AG04449 (cell line): ENCODE measurements at regions of chr6 and their contacts with region 1.

Region 1: DNA sequence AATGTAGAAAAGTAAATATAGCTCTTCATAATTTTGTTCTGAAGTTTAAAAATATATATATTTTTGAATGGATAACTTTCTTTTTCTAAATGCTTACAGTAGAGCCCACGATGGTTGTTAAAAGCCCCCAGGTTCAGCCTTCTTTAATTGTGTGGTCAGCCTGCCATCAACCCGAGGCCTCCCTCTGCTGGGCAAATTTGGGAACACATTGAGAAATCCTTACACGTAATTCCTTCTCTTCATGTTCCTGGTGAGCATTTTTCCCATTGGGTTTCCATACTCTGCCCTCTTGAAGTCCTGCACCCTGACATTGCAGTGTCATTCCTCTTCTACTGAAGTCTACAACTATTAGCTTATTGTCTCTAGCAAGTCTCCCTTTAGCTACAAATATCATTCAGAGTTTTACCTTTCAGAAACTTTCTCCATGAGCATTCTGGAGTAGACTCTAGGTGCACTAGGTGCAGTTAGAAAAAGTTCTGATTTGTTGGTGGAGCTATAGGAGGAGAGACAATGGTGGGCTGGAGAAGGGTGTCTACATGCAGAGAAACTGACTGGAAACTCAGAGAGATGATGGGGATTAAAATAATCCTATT is 40.6 kb downstream of the TRIM38 start:
- DNase-seq: no peak
- H3K4me3 ChIP-seq: no peak overlapping the region
- CTCF ChIP-seq: peak; percentile 81

Region 2: GRCh38 chr6:25717866-25718740 is 285.1 kb before region 1 on chr6:
- CTCF ChIA-PET with region 1: interaction called, 16 read pairs
- POLR2A ChIA-PET with region 1: no interaction called
- DNase-seq: no peak
- H3K4me3 ChIP-seq: no peak overlapping the region
- CTCF ChIP-seq: peak; percentile 35

Region 3: GRCh38 chr6:25788305-25788922 is 214.8 kb before region 1 on chr6:
- CTCF ChIA-PET with region 1: interaction called, 68 read pairs
- POLR2A ChIA-PET with region 1: no interaction called
- DNase-seq: peak; percentile 7
- H3K4me3 ChIP-seq: no peak overlapping the region
- CTCF ChIP-seq: peak; percentile 65

Region 4: GRCh38 chr6:25962149-25963127 is 40.8 kb before region 1 on chr6 and contains the start of gene TRIM38:
- CTCF ChIA-PET with region 1: interaction called, 14 read pairs
- POLR2A ChIA-PET with region 1: no interaction called
- DNase-seq: peak; percentile 74
- H3K4me3 ChIP-seq: peak within 1 kb of the TSS; percentile 65
- CTCF ChIP-seq: no peak

Region 5: DNA sequence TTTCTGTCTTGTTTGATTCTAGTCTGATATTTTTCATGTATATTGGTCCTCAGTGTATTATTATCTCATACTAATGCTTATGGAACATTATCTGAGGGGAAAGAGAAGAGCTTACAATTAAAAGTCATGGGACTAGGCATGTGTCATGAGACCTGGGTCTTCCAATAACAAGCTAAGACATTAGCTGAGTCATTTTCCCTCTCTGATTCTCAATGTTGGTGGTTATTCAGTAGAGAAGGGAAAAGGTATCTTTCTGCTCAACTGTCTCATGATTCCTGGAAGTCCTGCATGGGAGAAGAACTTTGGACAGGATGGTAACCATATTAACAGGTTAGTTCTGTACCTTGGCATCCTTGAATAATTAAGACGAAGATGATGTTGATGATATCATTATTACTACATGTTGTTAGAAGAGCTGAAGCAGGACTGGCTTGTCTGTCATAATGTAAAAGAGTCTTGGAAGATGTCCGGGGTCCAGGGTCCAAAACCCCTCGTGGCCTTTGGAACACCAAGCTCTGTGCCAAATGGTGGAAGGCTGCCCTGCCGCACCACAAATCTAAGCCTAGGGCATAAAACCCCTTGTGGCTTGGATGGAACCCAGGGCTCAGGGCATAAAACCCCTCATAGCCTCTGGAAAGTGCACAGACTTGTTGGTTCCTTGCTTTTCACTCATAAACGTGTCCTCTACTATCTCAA is 21.5 kb before region 1 on chr6:
- CTCF ChIA-PET with region 1: interaction called, 12 read pairs
- POLR2A ChIA-PET with region 1: no interaction called
- DNase-seq: no peak
- H3K4me3 ChIP-seq: no peak overlapping the region
- CTCF ChIP-seq: no peak

Region 6: GRCh38 chr6:25992413-25993037 is 10.7 kb before region 1 on chr6:
- CTCF ChIA-PET with region 1: interaction called, 160 read pairs
- POLR2A ChIA-PET with region 1: no interaction called
- DNase-seq: peak; percentile 24
- H3K4me3 ChIP-seq: peak overlapping the region; percentile 75
- CTCF ChIP-seq: peak; percentile 99

Region 7: DNA sequence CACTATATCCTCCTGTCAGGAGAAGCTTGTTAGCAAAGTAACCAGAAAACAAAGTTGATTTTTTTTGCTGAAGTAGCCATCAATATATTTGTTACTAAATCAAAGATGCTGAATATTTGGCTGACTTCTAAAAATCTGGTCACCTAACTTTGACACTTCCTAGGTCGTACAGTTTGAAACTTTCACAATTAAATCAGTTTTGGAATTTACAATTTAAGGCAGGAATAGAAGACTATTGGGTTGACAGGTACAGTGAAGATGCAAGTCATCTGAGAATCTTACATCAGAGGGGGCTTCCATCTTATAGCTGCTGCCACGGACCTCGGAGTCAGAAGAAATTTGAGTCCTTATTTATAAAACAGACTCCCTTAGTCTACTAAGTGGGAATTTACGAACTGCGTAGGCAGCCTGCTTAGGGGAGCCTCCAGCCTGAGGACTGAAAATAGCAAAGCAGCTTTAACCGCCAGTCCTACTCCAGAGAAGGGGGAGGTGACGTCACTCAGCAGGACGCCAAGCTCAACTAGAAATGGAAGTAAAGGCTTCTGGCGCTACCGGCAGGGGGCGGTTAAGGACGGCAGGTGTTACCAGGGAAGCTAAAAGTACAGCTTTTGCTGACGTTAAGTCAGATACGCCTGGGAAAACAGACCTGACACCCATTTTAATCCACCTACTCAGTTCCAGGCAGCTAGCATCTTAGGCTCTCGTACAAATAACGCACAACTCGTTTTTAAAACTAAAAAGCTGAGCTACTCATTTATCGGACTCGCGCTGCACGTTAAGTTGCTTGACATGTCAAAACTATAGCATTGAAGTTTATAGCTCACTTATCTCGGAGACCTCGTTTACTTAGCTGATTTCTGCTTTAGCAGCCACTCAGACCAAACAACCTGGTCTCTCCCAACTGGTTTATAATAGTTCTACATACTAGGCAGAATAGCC is 23.0 kb after region 1 on chr6:
- CTCF ChIA-PET with region 1: interaction called, 283 read pairs
- POLR2A ChIA-PET with region 1: interaction called, 5 read pairs
- DNase-seq: no peak
- H3K4me3 ChIP-seq: peak overlapping the region; percentile 84
- CTCF ChIP-seq: peak; percentile 90

Region 8: DNA sequence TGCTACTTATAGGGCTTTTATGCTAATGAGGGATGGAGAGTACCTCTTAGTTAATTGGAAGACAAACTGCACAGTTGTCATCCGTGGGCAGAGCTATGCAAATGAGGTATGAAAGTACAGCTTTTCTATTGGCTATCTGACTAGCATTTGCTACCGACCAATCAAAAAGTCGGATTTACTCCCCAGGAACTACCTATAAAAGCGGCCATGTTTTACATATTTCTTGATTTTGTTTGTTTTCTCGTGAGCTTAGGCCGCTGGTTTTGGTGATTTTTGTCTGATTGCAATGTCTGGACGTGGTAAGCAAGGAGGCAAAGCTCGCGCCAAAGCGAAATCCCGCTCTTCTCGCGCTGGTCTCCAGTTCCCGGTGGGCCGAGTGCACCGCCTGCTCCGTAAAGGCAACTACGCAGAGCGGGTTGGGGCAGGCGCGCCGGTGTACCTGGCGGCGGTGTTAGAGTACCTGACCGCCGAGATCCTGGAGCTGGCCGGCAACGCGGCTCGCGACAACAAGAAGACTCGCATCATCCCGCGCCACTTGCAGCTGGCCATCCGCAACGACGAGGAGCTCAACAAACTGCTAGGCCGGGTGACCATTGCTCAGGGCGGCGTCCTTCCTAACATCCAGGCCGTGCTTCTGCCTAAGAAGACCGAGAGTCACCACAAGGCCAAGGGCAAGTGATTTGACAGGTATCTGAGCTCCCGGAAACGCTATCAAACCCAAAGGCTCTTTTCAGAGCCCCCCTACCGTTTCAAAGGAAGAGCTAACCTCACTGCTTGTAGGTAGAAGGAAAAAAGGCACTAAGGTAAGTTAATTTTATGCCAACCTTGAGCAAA is 121.0 kb after region 1 on chr6:
- CTCF ChIA-PET with region 1: no interaction called
- POLR2A ChIA-PET with region 1: no interaction called
- DNase-seq: peak; percentile 99
- H3K4me3 ChIP-seq: peak overlapping the region; percentile 87
- CTCF ChIP-seq: no peak